Right cardiac atrium (tissue), 5 donors: ENCODE measurements at regions of chrX and their contacts with region 1.

Region 1: GRCh38 chrX:140701480-140701879 is 8.1 kb upstream of the LINC00632 start:
- DNase-seq: no peak
- ATAC-seq: peak in 1 of 2 donors; percentile 62
- H3K4me3 ChIP-seq: no peak overlapping the region
- H3K27ac ChIP-seq: no peak overlapping the region
- H3K4me1 ChIP-seq: no peaks in the 10 kb centered on the region
- H3K27me3 ChIP-seq: no peaks in the 10 kb centered on the region

Region 2: GRCh38 chrX:140664939-140665338 is 36.5 kb before region 1 on chrX:
- intact Hi-C with region 1: no loop called
- DNase-seq: no peak
- ATAC-seq: no peak
- H3K4me3 ChIP-seq: no peak overlapping the region
- H3K27ac ChIP-seq: no peak overlapping the region
- H3K4me1 ChIP-seq: no peaks in the 10 kb centered on the region
- H3K27me3 ChIP-seq: no peaks in the 10 kb centered on the region

Region 3: GRCh38 chrX:140733769-140734342 is 32.4 kb after region 1 on chrX:
- intact Hi-C with region 1: loop called in 2 of 4 experiments (anchors 2 kb)
- DNase-seq: no peak
- ATAC-seq: peak; percentile 64 to 66
- H3K4me3 ChIP-seq: no peak overlapping the region
- H3K27ac ChIP-seq: no peak overlapping the region
- H3K4me1 ChIP-seq: no peaks in the 10 kb centered on the region
- H3K27me3 ChIP-seq: no peaks in the 10 kb centered on the region